ENCODE measurements at regions of chr2 and their contacts with region 1.

Region 1: DNA sequence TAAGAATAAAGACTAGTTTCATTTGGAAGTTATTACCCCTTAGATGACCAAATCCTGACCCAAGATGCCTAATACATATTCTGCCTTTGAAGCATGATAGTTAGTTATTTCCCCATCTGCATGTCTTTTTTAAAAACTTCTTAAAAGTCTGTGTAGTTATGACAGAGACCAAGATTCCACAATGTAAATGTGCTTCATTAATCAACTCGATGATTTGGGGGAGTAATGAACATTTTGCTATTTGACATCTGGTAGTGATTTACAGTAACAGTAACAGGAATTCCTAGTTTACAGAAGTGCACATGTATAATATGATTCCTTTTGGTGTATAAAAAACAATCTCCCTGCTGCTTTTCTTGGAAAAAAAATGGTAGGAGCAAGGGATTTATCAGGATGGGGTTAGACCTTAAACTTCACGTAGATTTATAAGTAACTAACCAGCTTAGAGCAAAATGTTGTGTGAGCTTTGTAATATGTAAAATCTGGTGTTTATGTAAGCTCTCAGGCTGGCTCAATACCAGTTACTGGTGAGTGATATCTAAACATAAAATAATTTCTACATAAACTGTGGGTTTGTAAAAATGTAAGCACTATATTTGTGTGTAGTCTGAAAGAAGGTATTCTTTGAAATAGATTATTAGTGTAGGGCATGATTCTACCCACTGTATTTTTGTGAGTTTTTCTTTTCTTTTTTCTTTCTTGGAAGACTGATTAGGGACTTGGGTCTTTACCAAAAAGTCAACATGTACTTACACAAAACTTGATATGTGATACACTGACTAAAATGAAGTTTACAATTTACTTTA is 641.6 kb downstream of the EPHA4 start:
- DNase-seq: no peak
- H3K4me3 ChIP-seq: no peak overlapping the region
- H3K27ac ChIP-seq: no peak overlapping the region
- H3K4me1 ChIP-seq: no peaks in the 10 kb centered on the region
- H3K27me3 ChIP-seq: no peaks in the 10 kb centered on the region
- CTCF ChIP-seq: no peak
- POLR2A ChIP-seq: no peak

Region 2: DNA sequence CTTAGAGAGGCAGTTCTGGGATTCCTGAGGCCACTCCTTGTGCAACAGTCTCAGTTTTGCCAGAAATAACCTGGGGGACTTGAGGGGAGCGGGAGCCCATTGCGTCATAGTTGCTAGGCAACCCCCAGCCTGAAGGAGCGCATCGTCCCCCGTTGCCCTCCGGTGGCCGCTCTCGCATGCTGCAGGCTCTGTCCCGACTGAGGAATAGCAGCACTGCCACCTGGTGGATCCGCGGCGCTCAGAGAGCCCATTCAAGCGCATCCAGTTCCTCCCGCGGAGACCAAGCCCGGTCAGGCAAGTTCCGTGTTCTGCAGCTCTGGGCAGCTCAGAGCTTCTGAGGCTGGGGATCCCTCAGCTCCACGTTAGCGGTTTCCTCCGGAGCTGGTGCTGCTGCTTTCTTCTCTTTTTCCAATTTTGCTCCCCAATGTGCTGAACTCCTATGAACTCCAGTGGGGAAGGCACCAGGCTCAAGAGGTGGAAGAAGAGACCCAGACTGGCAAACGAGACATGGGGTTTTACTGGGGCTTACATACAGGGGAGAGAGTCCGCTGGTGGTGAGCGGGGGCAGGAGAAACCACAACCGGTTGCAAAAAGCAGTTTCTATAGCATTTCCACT is 1287.9 kb before region 1 on chr2:
- intact Hi-C with region 1: no loop called
- DNase-seq: peak; percentile 88 to 98
- H3K4me3 ChIP-seq: no peak overlapping the region
- H3K27ac ChIP-seq: no peak overlapping the region
- H3K4me1 ChIP-seq: peaks cover 20% of the 10 kb centered on the region
- H3K27me3 ChIP-seq: no peaks in the 10 kb centered on the region
- CTCF ChIP-seq: peak; percentile 98 to 100 (median 98)
- POLR2A ChIP-seq: no peak

Region 3: GRCh38 chr2:221156062-221156742 is 225.7 kb after region 1 on chr2:
- intact Hi-C with region 1: no loop called
- DNase-seq: no peak
- H3K4me3 ChIP-seq: no peak overlapping the region
- H3K27ac ChIP-seq: no peak overlapping the region
- H3K4me1 ChIP-seq: no peaks in the 10 kb centered on the region
- H3K27me3 ChIP-seq: no peaks in the 10 kb centered on the region
- CTCF ChIP-seq: no peak
- POLR2A ChIP-seq: no peak

Region 4: DNA sequence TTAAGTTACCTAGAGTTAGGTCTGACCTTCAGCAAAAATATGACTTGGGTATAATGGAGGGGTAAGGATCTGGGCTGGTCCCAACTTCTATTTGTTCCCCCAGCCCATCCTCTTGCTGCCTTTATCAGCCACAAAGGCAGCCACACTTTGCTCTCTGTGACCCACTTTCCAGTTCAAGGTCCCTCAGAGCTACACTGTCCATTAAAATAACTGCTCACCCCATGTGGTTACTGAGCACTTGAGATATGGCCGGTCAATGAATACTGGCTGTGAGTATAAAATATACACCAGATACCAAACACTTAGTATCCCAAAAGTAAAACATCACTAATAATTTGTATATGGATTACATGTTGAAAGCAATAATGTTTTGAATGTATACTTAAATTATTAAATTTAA is 574.4 kb after region 1 on chr2:
- intact Hi-C with region 1: loop called (anchors 5 kb)
- DNase-seq: no peak
- H3K4me3 ChIP-seq: no peak overlapping the region
- H3K27ac ChIP-seq: no peak overlapping the region
- H3K4me1 ChIP-seq: peaks cover 11% of the 10 kb centered on the region
- H3K27me3 ChIP-seq: no peaks in the 10 kb centered on the region
- CTCF ChIP-seq: no peak
- POLR2A ChIP-seq: no peak